Heart right ventricle (tissue), 16 donors: ENCODE measurements at regions of chr19 and their contacts with region 1.

Region 1: GRCh38 chr19:55809381-55810058 is 22.3 kb downstream of the NLRP11 start:
- DNase-seq: peak; percentile 6 to 10
- ATAC-seq: peak in 3 of 8 donors; percentile 52 to 63 (median 58)
- H3K4me3 ChIP-seq: no peak overlapping the region
- H3K27ac ChIP-seq: no peak overlapping the region
- H3K4me1 ChIP-seq: no peaks in the 10 kb centered on the region
- H3K27me3 ChIP-seq: peaks cover 0 to 13% (median 0%) of the 10 kb centered on the region in 7 donors
- CTCF ChIP-seq: peak in 5 of 9 donors; percentile 24 to 40 (median 27)

Region 2: GRCh38 chr19:55632463-55632834 is 177.1 kb before region 1 on chr19:
- intact Hi-C with region 1: loop called in 1 of 10 experiments (anchors 5 kb)
- DNase-seq: peak in 1 of 2 donors; percentile 92
- ATAC-seq: peak; percentile 27 to 73 (median 49)
- H3K4me3 ChIP-seq: no peak overlapping the region
- H3K27ac ChIP-seq: peak overlapping the region in 1 of 10 donors; percentile 31
- H3K4me1 ChIP-seq: peaks cover 7 to 37% (median 26%) of the 10 kb centered on the region in 9 donors
- H3K27me3 ChIP-seq: no peaks in the 10 kb centered on the region
- CTCF ChIP-seq: peak; percentile 82 to 94 (median 86)